Activated T-helper 2 cell treated with anti-CD3 and anti-CD28 coated beads, Interferon-gamma antibody, Interleukin-2, Interleukin-4, amounts not matched to agents 10 μg/mL and 5 μg/mL and 100 μg/mL, durations not matched to agents 14 hours and 24 hours and 36 hours (primary cell): ENCODE measurements at regions of chrX and their contacts with region 1.

Region 1: DNA sequence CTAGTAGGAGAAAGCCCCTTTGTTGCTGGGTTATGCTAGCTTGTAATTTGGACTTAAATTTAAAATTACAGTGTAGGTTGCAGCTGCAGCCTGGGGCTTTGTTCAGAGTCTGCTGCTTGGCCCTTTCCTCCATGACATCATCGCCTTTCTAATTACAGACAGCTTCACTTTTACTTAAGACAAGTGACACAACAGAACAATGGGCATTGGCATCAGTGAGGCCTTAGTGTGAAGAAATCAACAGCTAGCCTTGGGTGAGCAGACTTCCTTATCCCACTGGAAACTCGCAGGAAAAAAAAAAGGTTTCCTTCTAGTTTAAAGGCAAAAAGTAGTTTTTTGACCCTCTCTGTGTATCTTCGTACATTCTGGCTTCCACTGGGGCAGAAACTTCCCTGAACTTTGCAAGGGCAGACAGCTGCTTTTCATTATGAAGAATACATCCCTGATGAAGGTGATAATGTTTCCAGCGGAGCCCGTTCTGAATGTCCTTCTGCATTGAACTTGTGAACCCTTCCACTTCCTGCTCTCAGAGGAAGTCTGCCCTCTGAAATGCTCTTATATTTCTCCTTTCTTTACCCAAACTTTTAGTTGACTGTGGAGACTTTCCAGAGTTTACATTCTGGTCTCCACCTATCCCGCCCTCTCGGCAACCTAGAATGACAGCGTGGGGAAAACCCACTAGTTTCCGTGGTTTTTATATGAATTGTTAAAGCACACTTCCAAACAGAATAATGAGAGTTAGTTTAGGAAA is 123.2 kb upstream of the FAM9C start:
- DNase-seq: no peak
- H3K4me3 Mint-ChIP-seq: peak overlapping the region; percentile 17
- H3K27ac Mint-ChIP-seq: peak overlapping the region; percentile 86
- H3K4me1 Mint-ChIP-seq: peaks cover 22% of the 10 kb centered on the region
- H3K27me3 Mint-ChIP-seq: no peaks in the 10 kb centered on the region

Region 2: DNA sequence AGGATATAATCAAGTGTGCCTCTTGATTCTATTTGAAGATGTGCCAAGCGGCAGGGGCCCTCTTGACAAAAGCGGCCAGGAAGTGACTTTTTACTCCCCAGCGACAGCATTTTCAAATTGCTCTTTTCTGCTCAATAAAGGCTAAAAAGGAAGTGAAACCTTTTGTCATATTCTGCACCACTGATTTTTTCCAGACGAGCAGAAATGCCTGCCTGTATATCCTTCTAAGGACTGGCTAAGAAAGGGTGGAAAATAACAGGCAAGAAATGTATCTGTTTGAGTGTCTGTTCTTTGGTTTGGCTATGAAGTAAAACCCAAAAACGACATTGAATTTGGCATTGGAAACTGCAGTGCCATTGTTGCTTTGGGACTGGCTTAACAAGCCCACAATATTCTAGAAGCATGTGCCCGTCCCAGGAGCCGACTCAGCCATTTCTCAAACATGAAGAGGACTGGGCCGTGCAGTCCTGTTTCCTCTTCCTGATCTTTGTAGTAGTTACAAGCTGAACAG is 167.3 kb before region 1 on chrX:
- intact Hi-C with region 1: loop called (anchors 5 kb)
- DNase-seq: no peak
- H3K4me3 Mint-ChIP-seq: peak overlapping the region; percentile 66
- H3K27ac Mint-ChIP-seq: peak overlapping the region; percentile 98
- H3K4me1 Mint-ChIP-seq: peaks cover 62% of the 10 kb centered on the region
- H3K27me3 Mint-ChIP-seq: no peaks in the 10 kb centered on the region

Region 3: DNA sequence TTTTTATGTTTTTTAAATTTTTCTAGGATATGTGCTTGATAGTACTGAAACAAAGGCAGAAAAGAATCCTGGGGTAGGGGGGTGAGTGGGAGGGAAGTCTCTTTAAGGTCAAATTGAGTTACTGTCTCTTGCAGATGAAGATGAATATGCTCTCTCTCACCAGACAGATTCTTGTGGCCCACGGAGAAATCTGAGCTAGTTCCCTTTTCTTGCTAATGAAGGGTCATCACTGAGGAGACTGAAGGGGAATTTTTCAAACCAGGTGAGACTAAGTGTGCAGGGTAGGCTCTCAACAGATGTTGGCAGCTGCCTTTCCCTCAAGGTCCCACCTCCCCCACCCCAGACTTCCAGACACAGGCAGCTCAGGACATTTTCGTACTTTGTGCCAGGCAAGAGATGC is 144.7 kb before region 1 on chrX:
- intact Hi-C with region 1: no loop called
- DNase-seq: no peak
- H3K4me3 Mint-ChIP-seq: no peak overlapping the region
- H3K27ac Mint-ChIP-seq: no peak overlapping the region
- H3K4me1 Mint-ChIP-seq: peaks cover 41% of the 10 kb centered on the region
- H3K27me3 Mint-ChIP-seq: no peaks in the 10 kb centered on the region

Region 4: DNA sequence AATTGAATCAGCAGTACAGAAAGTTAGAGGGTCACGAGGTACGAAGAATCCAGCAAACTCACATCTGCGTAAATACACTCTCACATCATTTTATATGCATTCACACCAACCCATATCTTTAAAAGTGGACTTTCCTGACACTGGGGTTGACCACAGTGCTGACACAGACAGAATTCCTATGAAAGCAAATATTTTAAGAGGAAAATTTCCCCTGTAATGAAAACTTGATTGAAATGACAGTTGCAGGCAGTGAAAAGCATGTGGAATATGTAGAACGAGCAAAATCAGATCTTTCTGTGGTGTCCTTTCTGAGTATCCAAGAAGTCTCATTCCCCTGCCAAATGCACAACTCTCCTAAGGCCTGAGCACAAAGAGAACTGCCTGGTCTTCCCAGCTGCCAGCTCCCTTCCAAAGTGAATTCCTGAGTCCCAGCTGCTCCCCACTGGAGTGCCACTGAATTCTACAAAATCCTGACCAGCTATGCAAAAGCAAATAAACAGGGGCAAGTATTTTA is 72.8 kb before region 1 on chrX:
- intact Hi-C with region 1: loop called (anchors 5 kb)
- DNase-seq: no peak
- H3K4me3 Mint-ChIP-seq: no peak overlapping the region
- H3K27ac Mint-ChIP-seq: peak overlapping the region; percentile 69
- H3K4me1 Mint-ChIP-seq: peaks cover 63% of the 10 kb centered on the region
- H3K27me3 Mint-ChIP-seq: no peaks in the 10 kb centered on the region

Region 5: DNA sequence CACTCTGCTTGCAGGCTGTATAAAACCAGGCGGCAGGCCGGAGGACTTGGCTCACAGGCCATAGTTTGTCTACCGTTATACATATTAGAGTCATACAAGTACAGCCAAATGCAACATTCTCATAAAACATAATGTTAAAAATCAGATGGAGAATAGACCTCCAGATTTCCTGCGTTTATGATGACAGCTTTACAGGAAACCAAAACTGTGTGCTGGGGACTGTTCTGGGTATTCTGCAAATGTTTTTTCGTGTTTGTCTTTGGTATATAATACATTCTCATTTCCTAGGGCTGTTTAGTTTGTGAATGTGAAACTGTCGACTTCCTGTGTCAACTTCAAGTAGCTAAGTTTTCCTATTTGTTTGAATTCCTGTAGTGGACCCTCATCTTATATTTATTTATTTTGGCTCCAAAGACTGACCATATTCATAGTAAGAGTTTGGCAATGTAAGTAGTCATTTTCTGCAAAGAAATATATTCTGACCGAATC is 43.8 kb before region 1 on chrX:
- intact Hi-C with region 1: loop called (anchors 5 kb)
- DNase-seq: no peak
- H3K4me3 Mint-ChIP-seq: peak overlapping the region; percentile 26
- H3K27ac Mint-ChIP-seq: peak overlapping the region; percentile 82
- H3K4me1 Mint-ChIP-seq: peaks cover 39% of the 10 kb centered on the region
- H3K27me3 Mint-ChIP-seq: no peaks in the 10 kb centered on the region

Region 6: GRCh38 chrX:13194291-13195103 is 26.8 kb after region 1 on chrX:
- intact Hi-C with region 1: no loop called
- DNase-seq: no peak
- H3K4me3 Mint-ChIP-seq: no peak overlapping the region
- H3K27ac Mint-ChIP-seq: no peak overlapping the region
- H3K4me1 Mint-ChIP-seq: peaks cover 4% of the 10 kb centered on the region
- H3K27me3 Mint-ChIP-seq: no peaks in the 10 kb centered on the region